Vagina (tissue), 2 donors: ENCODE measurements at regions of chr13 and their contacts with region 1.

Region 1: DNA sequence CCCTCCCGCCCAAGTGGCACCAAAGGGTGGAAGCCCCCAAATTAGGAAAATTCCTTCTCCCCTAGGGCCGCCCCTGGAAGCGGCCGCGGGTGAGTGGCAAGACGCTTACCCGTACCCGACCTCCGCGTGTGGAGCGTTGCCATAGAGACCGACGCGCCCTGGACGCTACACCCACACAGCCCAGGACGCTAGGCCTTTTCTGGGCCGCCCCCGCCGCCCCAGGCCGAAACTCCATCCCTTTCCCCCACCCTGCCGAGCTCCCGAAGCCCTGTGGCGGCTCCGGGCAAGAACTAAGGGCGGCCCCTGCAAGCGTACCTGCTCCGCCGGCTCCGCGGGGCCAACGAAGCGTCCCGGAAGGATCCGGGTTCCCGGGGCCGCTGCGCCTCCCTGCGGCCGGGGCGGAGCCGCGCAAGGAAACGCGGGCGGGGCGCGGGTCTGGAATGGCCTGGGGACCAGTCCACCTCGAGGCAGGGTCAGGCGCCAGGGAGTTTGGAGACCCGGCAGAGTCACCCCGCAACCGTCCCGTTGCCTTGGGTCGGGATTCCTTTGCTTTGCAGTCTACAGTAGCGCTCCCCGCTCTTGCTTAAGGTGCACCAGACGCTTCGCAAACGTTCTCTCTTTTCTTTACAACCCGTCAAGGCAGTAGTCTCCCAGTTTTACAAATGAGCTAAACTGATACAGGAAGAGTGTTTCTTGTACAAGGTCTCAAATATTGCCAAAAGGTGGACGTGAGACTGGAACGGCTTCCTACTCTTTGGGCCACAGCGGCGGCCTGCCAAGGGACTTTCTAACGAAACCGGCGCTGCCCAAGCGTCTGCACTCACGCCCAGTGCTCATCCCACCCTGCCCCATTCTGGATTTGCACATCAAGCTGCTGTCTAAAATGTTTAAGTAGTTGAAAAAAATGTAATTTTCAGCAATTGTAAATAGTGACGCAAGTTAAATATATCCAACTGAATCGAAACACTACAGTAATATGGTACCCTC is at the start of gene NEK5:
- DNase-seq: no peak
- H3K4me3 ChIP-seq: peak within 1 kb of the TSS; percentile 54 to 63
- H3K27ac ChIP-seq: peak within 1 kb of the TSS; percentile 54
- H3K4me1 ChIP-seq: peaks cover 12% of the 10 kb centered on the region
- H3K27me3 ChIP-seq: no peaks in the 10 kb centered on the region
- CTCF ChIP-seq: peak in 2 of 3 experiments; percentile 36 to 61
- POLR2A ChIP-seq: no peak
- total RNA-seq, gene NEK5: 0.98 TPM

Region 2: GRCh38 chr13:51814825-51815650 is 314.0 kb before region 1 on chr13:
- intact Hi-C with region 1: loop called (anchors 10 kb)
- DNase-seq: no peak
- H3K4me3 ChIP-seq: peak overlapping the region in 1 of 2 donors; percentile 30
- H3K27ac ChIP-seq: no peak overlapping the region
- H3K4me1 ChIP-seq: peaks cover 22% of the 10 kb centered on the region
- H3K27me3 ChIP-seq: no peaks in the 10 kb centered on the region
- CTCF ChIP-seq: peak; percentile 67 to 82 (median 79)
- POLR2A ChIP-seq: no peak

Region 3: GRCh38 chr13:51895906-51896888 is 232.8 kb before region 1 on chr13:
- intact Hi-C with region 1: loop called (anchors 5 kb)
- DNase-seq: peak in 1 of 2 donors; percentile 72
- H3K4me3 ChIP-seq: no peak overlapping the region
- H3K27ac ChIP-seq: no peak overlapping the region
- H3K4me1 ChIP-seq: no peaks in the 10 kb centered on the region
- H3K27me3 ChIP-seq: no peaks in the 10 kb centered on the region
- CTCF ChIP-seq: peak in 1 of 3 experiments; percentile 21
- POLR2A ChIP-seq: no peak

Region 4: GRCh38 chr13:51995677-51996551 is 133.1 kb before region 1 on chr13:
- intact Hi-C with region 1: loop called (anchors 10 kb)
- DNase-seq: no peak
- H3K4me3 ChIP-seq: peak overlapping the region in 1 of 2 donors; percentile 16
- H3K27ac ChIP-seq: no peak overlapping the region
- H3K4me1 ChIP-seq: peaks cover 17% of the 10 kb centered on the region
- H3K27me3 ChIP-seq: no peaks in the 10 kb centered on the region
- CTCF ChIP-seq: no peak
- POLR2A ChIP-seq: no peak